ENCODE measurements at regions of chr10 and their contacts with region 1.

Region 1: DNA sequence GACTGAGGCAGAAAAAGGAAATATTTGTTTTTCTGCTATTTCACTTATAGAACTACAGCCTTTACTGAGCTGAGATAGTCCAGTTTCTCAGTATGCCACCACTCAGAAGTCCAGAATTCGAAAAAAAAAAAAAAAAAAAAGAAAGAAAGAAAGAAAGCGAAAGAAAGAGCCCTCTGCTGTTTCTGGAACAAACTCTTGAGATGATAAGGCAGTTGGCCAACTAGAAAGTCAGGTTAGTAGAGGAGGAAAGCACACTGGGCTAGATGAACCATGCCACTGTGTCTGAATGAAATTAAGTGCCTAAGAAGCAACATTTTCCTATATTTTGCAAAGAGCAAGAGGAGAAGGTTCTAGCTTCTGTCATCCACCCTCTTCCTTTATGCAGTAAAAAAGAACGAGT is 403.8 kb downstream of the SORCS3 start:
- DNase-seq: no peak
- H3K4me3 ChIP-seq: no peak overlapping the region
- H3K27ac ChIP-seq: no peak overlapping the region
- H3K4me1 ChIP-seq: no peaks in the 10 kb centered on the region
- H3K27me3 ChIP-seq: no peaks in the 10 kb centered on the region
- CTCF ChIP-seq: no peak
- POLR2A ChIP-seq: no peak

Region 2: GRCh38 chr10:103470761-103471653 is 1573.9 kb before region 1 on chr10:
- intact Hi-C with region 1: no loop called
- DNase-seq: peak in 1 of 2 donors; percentile 29
- H3K4me3 ChIP-seq: no peak overlapping the region
- H3K27ac ChIP-seq: peak overlapping the region in 1 of 2 donors; percentile 48
- H3K4me1 ChIP-seq: no peaks in the 10 kb centered on the region
- H3K27me3 ChIP-seq: no peaks in the 10 kb centered on the region
- CTCF ChIP-seq: no peak
- POLR2A ChIP-seq: no peak

Region 3: GRCh38 chr10:105092035-105092434 is 47.1 kb after region 1 on chr10:
- intact Hi-C with region 1: loop called (anchors 2 kb)
- DNase-seq: no peak
- H3K4me3 ChIP-seq: no peak overlapping the region
- H3K27ac ChIP-seq: no peak overlapping the region
- H3K4me1 ChIP-seq: no peaks in the 10 kb centered on the region
- H3K27me3 ChIP-seq: no peaks in the 10 kb centered on the region
- CTCF ChIP-seq: no peak
- POLR2A ChIP-seq: no peak